ENCODE measurements at regions of chr11 and their contacts with region 1.

Region 1: DNA sequence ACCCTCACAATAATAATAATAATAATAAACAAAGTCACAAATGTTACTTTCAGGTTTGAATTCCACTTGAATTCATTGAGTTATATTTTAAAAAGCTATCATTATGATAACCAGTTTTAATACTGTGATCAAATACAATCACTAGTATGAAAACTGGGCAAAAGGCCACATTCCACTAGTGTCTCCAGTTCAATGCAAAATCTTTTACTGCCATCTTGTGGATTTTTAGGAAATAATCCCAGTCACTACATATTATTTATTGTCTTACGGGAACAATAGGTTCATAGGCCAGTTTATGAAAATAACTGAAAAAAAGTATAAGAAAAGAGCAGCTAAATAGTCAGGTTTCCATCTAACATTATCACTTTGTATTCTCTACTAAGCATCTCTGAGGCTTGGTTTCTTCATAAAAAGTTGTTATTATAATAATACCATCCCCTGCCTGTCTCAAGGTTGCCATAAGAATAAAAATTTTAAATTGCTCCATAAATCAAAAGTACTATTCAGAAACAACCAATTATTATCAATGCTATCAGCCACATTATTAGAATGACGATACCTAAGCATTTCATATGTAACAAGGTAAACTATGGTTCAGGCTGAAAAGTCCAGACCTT is 533.9 kb upstream of the CCDC90B start:
- DNase-seq: peak; percentile 29
- H3K4me3 ChIP-seq: no peak overlapping the region
- H3K27ac ChIP-seq: no peak overlapping the region
- H3K4me1 ChIP-seq: peaks cover 2 to 30% of the 10 kb centered on the region in 2 experiments; a peak in 3 of 4 replicates
- H3K27me3 ChIP-seq: no peaks in the 10 kb centered on the region
- CTCF ChIP-seq: peak; percentile 80
- EP300 ChIP-seq: no peak
- RAD21 ChIP-seq: peak; percentile 95

Region 2: DNA sequence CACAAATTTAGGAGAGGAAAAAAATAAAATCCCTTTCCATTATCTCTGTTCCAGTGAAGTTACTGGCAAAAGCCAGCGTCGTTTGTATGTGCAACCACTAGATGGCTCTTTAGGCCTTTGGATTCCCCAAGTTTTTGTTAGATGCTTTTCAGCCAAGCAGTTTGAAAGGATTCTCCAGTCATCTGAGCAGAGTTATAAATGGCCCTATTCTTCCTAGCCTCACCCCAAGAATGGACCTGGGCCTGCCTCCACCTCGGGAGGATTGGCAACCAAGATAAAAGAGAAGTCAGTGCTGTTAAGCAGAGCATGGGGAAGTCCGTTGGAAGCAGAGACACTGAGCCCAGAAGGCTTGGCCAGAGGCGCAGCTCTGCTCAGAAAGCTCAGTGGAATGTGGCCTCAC is 1101.7 kb before region 1 on chr11:
- CTCF ChIA-PET with region 1: interaction called, 12 read pairs
- POLR2A ChIA-PET with region 1: no interaction called
- DNase-seq: peak; percentile 54
- H3K4me3 ChIP-seq: no peak overlapping the region
- H3K27ac ChIP-seq: no peak overlapping the region
- H3K4me1 ChIP-seq: peaks cover 0 to 7% of the 10 kb centered on the region in 2 experiments; a peak in 1 of 4 replicates
- H3K27me3 ChIP-seq: no peaks in the 10 kb centered on the region
- CTCF ChIP-seq: peak; percentile 83
- EP300 ChIP-seq: no peak
- RAD21 ChIP-seq: peak; percentile 89

Region 3: DNA sequence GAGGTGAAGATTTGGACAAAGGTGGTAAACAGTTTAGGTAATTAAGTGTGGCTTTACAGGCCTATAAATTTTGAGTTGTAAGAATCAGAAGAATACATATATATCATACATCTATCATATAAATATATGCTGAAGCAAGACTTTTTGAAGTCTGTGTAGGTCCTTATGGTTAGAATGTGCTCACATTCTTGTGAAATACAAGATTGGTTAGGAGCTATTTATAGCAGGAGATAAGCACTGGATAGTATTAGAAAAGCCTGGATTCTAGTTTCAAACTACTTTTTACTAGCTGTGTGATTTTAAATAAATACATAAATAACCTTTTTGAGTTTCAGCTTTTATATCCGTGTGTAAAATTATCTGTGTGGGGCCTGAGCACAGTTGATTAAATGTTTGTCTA is 584.2 kb before region 1 on chr11:
- CTCF ChIA-PET with region 1: interaction called, 10 read pairs
- POLR2A ChIA-PET with region 1: no interaction called
- DNase-seq: no peak
- H3K4me3 ChIP-seq: no peak overlapping the region
- H3K27ac ChIP-seq: no peak overlapping the region
- H3K4me1 ChIP-seq: no peaks in the 10 kb centered on the region
- H3K27me3 ChIP-seq: no peaks in the 10 kb centered on the region
- CTCF ChIP-seq: no peak
- EP300 ChIP-seq: no peak
- RAD21 ChIP-seq: no peak

Region 4: GRCh38 chr11:83249972-83250593 is 570.0 kb before region 1 on chr11:
- CTCF ChIA-PET with region 1: interaction called, 16 read pairs
- POLR2A ChIA-PET with region 1: no interaction called
- DNase-seq: peak; percentile 51
- H3K4me3 ChIP-seq: peak overlapping the region in 1 of 2 experiments; percentile 5; a peak in 1 of 4 replicates
- H3K27ac ChIP-seq: no peak overlapping the region
- H3K4me1 ChIP-seq: no peaks in the 10 kb centered on the region; a peak in 1 of 4 replicates
- H3K27me3 ChIP-seq: no peaks in the 10 kb centered on the region
- CTCF ChIP-seq: peak; percentile 78
- EP300 ChIP-seq: no peak
- RAD21 ChIP-seq: peak; percentile 72

Region 5: GRCh38 chr11:83292709-83293456 is 527.2 kb before region 1 on chr11:
- CTCF ChIA-PET with region 1: interaction called, 171 read pairs
- POLR2A ChIA-PET with region 1: no interaction called
- DNase-seq: peak; percentile 40
- H3K4me3 ChIP-seq: peak overlapping the region in 1 of 2 experiments; percentile 40; a peak in 1 of 4 replicates
- H3K27ac ChIP-seq: no peak overlapping the region
- H3K4me1 ChIP-seq: no peaks in the 10 kb centered on the region
- H3K27me3 ChIP-seq: no peaks in the 10 kb centered on the region
- CTCF ChIP-seq: peak; percentile 78
- EP300 ChIP-seq: no peak
- RAD21 ChIP-seq: peak; percentile 73

Region 6: GRCh38 chr11:83521647-83522596 is 298.1 kb before region 1 on chr11:
- CTCF ChIA-PET with region 1: interaction called, 90 read pairs
- POLR2A ChIA-PET with region 1: no interaction called
- DNase-seq: peak; percentile 51
- H3K4me3 ChIP-seq: no peak overlapping the region
- H3K27ac ChIP-seq: no peak overlapping the region
- H3K4me1 ChIP-seq: peaks cover 0 to 5% of the 10 kb centered on the region in 2 experiments; a peak in 1 of 4 replicates
- H3K27me3 ChIP-seq: no peaks in the 10 kb centered on the region
- CTCF ChIP-seq: peak; percentile 53
- EP300 ChIP-seq: no peak
- RAD21 ChIP-seq: peak; percentile 88

Region 7: DNA sequence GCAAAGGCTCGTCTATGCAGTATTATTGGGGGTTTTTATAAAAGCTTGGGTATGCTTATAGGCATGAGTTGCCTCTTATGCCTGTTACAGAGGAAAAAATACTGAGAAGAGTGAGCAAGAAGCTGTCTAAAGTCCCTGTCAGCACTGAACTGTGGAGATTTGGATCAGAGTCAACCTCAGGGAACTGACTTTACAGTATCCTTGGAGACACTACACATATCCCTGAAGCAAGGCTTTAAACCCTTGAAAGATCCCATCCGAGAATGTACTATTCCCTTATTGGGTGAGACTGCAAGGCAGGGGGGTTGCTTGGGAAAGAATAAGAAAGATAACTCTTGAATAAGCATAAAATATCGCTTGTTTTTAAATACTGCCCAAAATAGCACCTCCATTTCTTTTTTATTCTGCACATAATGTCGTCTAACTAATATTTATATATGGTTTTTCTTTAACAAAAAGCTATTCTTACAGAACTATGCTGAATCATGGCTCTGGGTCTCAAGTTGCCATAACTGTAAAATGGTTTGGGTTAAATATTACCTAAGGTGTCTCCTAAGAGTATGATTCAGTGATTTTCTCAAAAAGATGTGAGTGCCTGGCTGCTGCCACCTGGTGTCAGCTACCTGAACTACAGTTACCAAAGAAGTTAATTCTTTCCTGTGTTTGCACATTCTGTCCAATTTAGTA is 744.3 kb after region 1 on chr11:
- CTCF ChIA-PET with region 1: interaction called, 17 read pairs
- POLR2A ChIA-PET with region 1: no interaction called
- DNase-seq: peak; percentile 16
- H3K4me3 ChIP-seq: no peak overlapping the region; a peak in 1 of 4 replicates
- H3K27ac ChIP-seq: no peak overlapping the region
- H3K4me1 ChIP-seq: no peaks in the 10 kb centered on the region
- H3K27me3 ChIP-seq: no peaks in the 10 kb centered on the region
- CTCF ChIP-seq: peak; percentile 90
- EP300 ChIP-seq: no peak
- RAD21 ChIP-seq: peak; percentile 74

Measured in SK-N-SH (cell line).